ENCODE measurements at regions of chr14 and their contacts with region 1.

Region 1: GRCh38 chr14:22375321-22375930 is 213.6 kb downstream of the DAD1 start:
- DNase-seq: peak; percentile 66
- ATAC-seq: peak; percentile 47
- H3K4me3 ChIP-seq: no peak overlapping the region
- H3K4me3 Mint-ChIP-seq: no peak overlapping the region
- H3K27ac ChIP-seq: no peak overlapping the region
- H3K27ac Mint-ChIP-seq: no peak overlapping the region
- H3K4me1 ChIP-seq: peaks cover 0 to under 1% of the 10 kb centered on the region in 2 donors
- H3K4me1 Mint-ChIP-seq: no peaks in the 10 kb centered on the region
- H3K27me3 ChIP-seq: no peaks in the 10 kb centered on the region
- H3K27me3 Mint-ChIP-seq: no peaks in the 10 kb centered on the region
- CTCF ChIP-seq: peak; percentile 79

Region 2: DNA sequence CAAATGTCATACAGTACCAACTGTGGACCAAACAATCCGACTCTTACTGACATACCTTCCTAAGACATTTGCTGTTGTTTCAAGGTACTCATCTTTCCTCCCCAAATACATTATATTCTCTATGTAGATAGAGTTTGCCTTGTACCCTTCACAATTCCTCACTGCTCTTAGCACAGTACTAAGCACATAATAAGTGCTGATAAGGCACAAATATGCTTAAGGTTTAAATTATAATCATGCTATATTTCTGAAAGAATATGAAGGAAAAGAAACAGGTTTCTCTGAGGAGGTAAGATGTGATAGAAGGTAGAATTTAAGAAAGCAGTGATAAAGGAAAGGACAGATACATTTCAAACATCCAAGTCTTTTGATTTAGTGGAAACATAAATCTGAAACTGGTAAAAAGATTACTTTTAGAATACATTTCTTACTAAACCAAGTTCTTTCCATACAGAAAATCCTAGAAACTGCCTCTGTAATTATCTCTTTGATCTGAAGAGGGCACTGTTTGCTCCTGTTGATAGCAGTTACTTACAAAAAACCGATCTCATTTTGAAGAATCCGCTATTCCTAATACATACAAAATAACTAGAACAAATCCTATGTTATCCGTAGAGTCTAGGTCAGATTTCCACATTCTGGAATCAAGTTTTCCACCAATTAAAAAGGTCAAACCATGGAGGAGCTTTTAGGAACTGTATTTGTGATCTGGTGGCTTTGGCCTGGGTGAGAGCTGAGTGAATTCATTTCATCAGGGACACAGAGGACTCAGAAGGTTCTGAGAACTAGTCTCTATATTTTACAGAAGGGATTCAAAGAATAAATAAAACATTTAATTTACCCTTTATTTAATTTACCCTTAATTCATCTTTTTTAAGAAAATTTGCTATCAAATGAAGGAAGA is 98.3 kb before region 1 on chr14:
- CTCF ChIA-PET with region 1: interaction called, 10 read pairs
- POLR2A ChIA-PET with region 1: no interaction called
- intact Hi-C with region 1: loop called (anchors 1 kb)
- DNase-seq: peak; percentile 46
- ATAC-seq: no peak
- H3K4me3 ChIP-seq: no peak overlapping the region
- H3K4me3 Mint-ChIP-seq: no peak overlapping the region
- H3K27ac ChIP-seq: no peak overlapping the region
- H3K27ac Mint-ChIP-seq: no peak overlapping the region
- H3K4me1 ChIP-seq: peaks cover 12 to 14% of the 10 kb centered on the region in 2 donors
- H3K4me1 Mint-ChIP-seq: peaks cover 16% of the 10 kb centered on the region
- H3K27me3 ChIP-seq: peaks cover 0 to 7% (median 2%) of the 10 kb centered on the region in 4 experiments
- H3K27me3 Mint-ChIP-seq: peaks cover 27% of the 10 kb centered on the region
- CTCF ChIP-seq: peak; percentile 91

Region 3: DNA sequence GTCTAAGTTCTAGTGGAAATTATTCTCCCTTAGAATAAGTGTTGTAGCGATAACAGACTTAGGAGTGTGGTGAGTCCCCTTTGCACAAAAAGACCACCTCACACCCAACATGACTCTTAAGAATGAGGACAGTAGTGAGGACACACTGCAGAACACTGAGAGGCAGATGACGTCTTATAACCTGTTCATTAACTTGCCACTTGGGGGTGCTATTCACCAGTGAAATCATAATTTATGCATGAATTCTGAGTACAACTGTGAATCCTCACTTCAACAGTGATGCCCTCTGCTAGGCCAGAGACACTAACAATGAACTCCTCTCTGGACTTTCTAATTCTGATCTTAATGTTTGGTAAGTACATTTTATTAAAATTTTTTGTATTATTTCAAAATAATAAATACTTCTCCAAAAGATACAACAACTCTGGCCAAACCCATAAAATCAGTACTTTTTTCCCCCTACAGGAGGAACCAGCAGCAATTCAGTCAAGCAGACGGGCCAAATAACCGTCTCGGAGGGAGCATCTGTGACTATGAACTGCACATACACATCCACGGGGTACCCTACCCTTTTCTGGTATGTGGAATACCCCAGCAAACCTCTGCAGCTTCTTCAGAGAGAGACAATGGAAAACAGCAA is 61.1 kb before region 1 on chr14:
- CTCF ChIA-PET with region 1: interaction called, 71 read pairs
- POLR2A ChIA-PET with region 1: no interaction called
- intact Hi-C with region 1: loop called (anchors 1 kb)
- DNase-seq: peak; percentile 78
- ATAC-seq: peak; percentile 93
- H3K4me3 ChIP-seq: no peak overlapping the region
- H3K4me3 Mint-ChIP-seq: no peak overlapping the region
- H3K27ac ChIP-seq: no peak overlapping the region
- H3K27ac Mint-ChIP-seq: no peak overlapping the region
- H3K4me1 ChIP-seq: no peaks in the 10 kb centered on the region
- H3K4me1 Mint-ChIP-seq: peaks cover 5% of the 10 kb centered on the region
- H3K27me3 ChIP-seq: no peaks in the 10 kb centered on the region
- H3K27me3 Mint-ChIP-seq: no peaks in the 10 kb centered on the region
- CTCF ChIP-seq: peak; percentile 88

Measured in B cell (primary cell).